Mammary epithelial cell (primary cell): ENCODE measurements at regions of chr17 and their contacts with region 1.

Region 1: GRCh38 chr17:42686520-42687144 is 4.3 kb downstream of the CNTNAP1 start:
- DNase-seq: no peak
- H3K4me3 ChIP-seq: no peak overlapping the region
- H3K27ac ChIP-seq: no peak overlapping the region
- H3K4me1 ChIP-seq: peaks cover 15% of the 10 kb centered on the region
- H3K27me3 ChIP-seq: no peaks in the 10 kb centered on the region
- CTCF ChIP-seq: no peak

Region 2: GRCh38 chr17:41547865-41548491 is 1138.7 kb before region 1 on chr17:
- CTCF ChIA-PET with region 1: no interaction called
- dilution Hi-C with region 1: no loop called
- in situ Hi-C with region 1: no loop called
- intact Hi-C with region 1: no loop called
- DNase-seq: peak; percentile 99
- H3K4me3 ChIP-seq: no peak overlapping the region
- H3K27ac ChIP-seq: peak overlapping the region; percentile 85
- H3K4me1 ChIP-seq: peaks cover 47% of the 10 kb centered on the region
- H3K27me3 ChIP-seq: no peaks in the 10 kb centered on the region
- CTCF ChIP-seq: peak in 1 of 2 donors; percentile 4

Region 3: GRCh38 chr17:42609182-42609813 is 77.3 kb before region 1 on chr17 and contains the starts of genes RETREG3 and TUBG1:
- CTCF ChIA-PET with region 1: no interaction called
- dilution Hi-C with region 1: loop called (anchors 5 kb)
- in situ Hi-C with region 1: no loop called
- intact Hi-C with region 1: no loop called
- DNase-seq: peak; percentile 100
- H3K4me3 ChIP-seq: peak within 1 kb of the TSS; percentile 68 to 91 (median 79)
- H3K27ac ChIP-seq: peak within 1 kb of the TSS; percentile 59
- H3K4me1 ChIP-seq: peaks cover 10% of the 10 kb centered on the region
- H3K27me3 ChIP-seq: no peaks in the 10 kb centered on the region
- CTCF ChIP-seq: peak; percentile 17 to 56
- total RNA-seq, gene RETREG3: 60.4 to 97.7 TPM
- total RNA-seq, gene TUBG1: 43.0 to 133 TPM

Region 4: GRCh38 chr17:42653179-42654124 is 33.2 kb before region 1 on chr17:
- CTCF ChIA-PET with region 1: no interaction called
- dilution Hi-C with region 1: loop called (anchors 5 kb)
- in situ Hi-C with region 1: no loop called
- intact Hi-C with region 1: no loop called
- DNase-seq: no peak
- H3K4me3 ChIP-seq: peak overlapping the region in 2 of 3 experiments; percentile 3 to 12
- H3K27ac ChIP-seq: no peak overlapping the region
- H3K4me1 ChIP-seq: peaks cover 4% of the 10 kb centered on the region
- H3K27me3 ChIP-seq: no peaks in the 10 kb centered on the region
- CTCF ChIP-seq: no peak

Region 5: GRCh38 chr17:42779936-42780850 is 93.6 kb after region 1 on chr17 and contains the start of gene WNK4:
- CTCF ChIA-PET with region 1: no interaction called
- dilution Hi-C with region 1: loop called (anchors 5 kb)
- in situ Hi-C with region 1: no loop called
- intact Hi-C with region 1: no loop called
- DNase-seq: no peak
- H3K4me3 ChIP-seq: peak within 1 kb of the TSS in 1 of 3 experiments; percentile 24
- H3K27ac ChIP-seq: no peak within 1 kb of the TSS
- H3K4me1 ChIP-seq: peaks cover 24% of the 10 kb centered on the region
- H3K27me3 ChIP-seq: peaks cover 2% of the 10 kb centered on the region
- CTCF ChIP-seq: no peak
- total RNA-seq, gene WNK4: 0.75 TPM in 1 of 2 donors, not detected in the other